Left cardiac atrium (tissue), 4 donors: ENCODE measurements at regions of chr9 and their contacts with region 1.

Region 1: DNA sequence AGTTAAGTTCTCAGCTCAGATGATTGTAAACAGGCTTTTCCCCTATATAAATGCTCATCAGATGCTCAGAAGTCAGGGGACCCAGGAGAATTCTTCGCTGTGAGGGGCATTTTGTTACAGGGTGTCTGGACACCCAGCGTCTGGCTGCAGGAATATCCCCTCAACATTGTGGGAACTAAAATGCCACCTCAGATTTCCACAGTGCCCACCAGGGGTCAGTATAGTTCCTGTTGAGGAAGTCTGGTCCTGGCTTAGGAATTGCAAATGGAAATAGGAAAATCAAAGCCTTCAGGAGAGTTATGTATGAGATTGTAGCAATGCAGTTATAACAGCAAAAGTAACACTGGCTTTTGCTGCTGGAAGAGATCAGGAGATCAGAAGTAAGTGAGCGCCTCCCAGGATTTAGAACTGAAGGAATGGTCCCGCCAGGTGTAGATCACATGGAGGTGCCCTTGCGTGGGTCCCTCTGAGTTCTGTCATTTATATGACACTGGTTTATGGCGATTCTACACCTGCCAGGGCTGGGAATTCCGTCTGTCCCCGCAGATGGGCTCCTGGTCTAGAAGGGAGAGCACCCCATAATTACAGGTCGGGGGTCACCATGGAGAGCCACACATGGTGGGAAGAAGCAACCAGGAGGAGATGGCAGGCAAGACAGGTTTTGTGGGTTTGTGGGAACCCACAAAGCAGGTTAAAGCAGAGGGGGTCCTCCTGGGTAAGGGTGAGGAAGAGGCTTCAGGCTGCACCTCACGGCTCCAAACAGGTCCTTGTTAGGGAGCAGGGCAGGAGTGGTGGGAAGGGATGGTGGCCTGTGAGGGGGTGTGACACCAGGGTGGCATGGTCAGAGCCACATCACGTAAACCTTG is 47.0 kb upstream of the CTSL start:
- DNase-seq: peak; percentile 62
- ATAC-seq: peak; percentile 17 to 31

Region 2: GRCh38 chr9:88041447-88041846 is 362.6 kb after region 1 on chr9:
- intact Hi-C with region 1: loop called (anchors 2 to 5 kb)
- DNase-seq: no peak
- ATAC-seq: no peak